Ascending aorta (tissue), 2 donors: ENCODE measurements at regions of chr7 and their contacts with region 1.

Region 1: GRCh38 chr7:159098811-159099655 is 45.6 kb downstream of the VIPR2 start:
- DNase-seq: peak in 1 of 2 donors; percentile 85
- H3K4me3 ChIP-seq: no peak overlapping the region
- H3K27ac ChIP-seq: peak overlapping the region; percentile 98 to 99
- H3K4me1 ChIP-seq: peaks cover 43 to 65% of the 10 kb centered on the region in 2 donors
- H3K27me3 ChIP-seq: no peaks in the 10 kb centered on the region
- CTCF ChIP-seq: peak; percentile 11 to 31 (median 19)

Region 2: DNA sequence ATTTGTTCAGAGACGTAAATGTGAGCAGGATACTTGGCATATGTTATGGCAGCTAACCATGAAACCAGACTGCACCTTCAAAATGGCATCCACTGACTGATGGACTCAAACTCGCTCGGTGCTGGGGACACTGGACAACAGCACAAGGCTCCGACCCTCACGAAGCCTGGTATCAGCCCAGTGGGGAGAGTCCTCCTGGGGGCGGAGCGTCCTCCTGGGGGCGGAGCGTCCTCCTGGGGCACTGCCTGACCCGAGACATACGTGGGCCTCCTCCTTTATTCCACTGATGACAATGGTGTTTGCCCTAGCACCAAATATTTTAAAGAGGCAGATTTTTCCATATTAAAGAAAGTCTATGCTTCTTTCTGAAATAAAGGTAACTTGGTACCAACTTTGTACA is 309.2 kb before region 1 on chr7:
- intact Hi-C with region 1: loop called (anchors 5 kb)
- DNase-seq: no peak
- H3K4me3 ChIP-seq: no peak overlapping the region
- H3K27ac ChIP-seq: peak overlapping the region in 1 of 2 donors; percentile 29
- H3K4me1 ChIP-seq: peaks cover 4 to 14% of the 10 kb centered on the region in 2 donors
- H3K27me3 ChIP-seq: no peaks in the 10 kb centered on the region
- CTCF ChIP-seq: no peak

Region 3: DNA sequence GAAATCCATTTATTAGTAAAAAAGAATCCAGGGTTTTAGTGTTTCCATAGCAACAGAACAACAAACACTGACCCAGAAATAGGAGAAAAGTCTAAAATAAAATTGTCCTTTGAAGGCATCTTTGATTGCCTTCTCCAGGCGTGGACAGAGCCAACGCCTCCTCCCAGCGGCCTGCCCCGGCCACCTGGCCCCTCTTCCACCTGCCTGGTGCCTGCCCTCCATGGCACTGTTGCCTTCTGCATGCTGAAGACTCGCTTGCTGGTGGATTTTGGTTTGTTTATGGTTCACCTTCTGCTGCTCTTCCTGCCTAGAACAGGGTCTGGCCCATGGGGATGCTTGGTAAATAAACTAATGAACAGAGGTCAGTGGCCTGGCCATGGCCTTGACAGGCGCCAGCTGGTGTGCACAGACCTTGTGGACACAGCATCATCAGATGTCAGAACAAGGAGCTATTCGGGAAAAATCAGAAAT is 135.2 kb before region 1 on chr7:
- intact Hi-C with region 1: no loop called
- DNase-seq: no peak
- H3K4me3 ChIP-seq: no peak overlapping the region
- H3K27ac ChIP-seq: no peak overlapping the region
- H3K4me1 ChIP-seq: no peaks in the 10 kb centered on the region
- H3K27me3 ChIP-seq: no peaks in the 10 kb centered on the region
- CTCF ChIP-seq: no peak

Region 4: GRCh38 chr7:159143780-159144757 is 45.0 kb after region 1 on chr7:
- intact Hi-C with region 1: loop called (anchors 2 kb)
- DNase-seq: no peak
- H3K4me3 ChIP-seq: peak overlapping the region; percentile 69 to 85
- H3K27ac ChIP-seq: peak overlapping the region; percentile 30 to 47
- H3K4me1 ChIP-seq: peaks cover 0 to 12% of the 10 kb centered on the region in 2 donors
- H3K27me3 ChIP-seq: no peaks in the 10 kb centered on the region
- CTCF ChIP-seq: no peak